A673 (cell line): ENCODE measurements at regions of chr17 and their contacts with region 1.

Region 1: DNA sequence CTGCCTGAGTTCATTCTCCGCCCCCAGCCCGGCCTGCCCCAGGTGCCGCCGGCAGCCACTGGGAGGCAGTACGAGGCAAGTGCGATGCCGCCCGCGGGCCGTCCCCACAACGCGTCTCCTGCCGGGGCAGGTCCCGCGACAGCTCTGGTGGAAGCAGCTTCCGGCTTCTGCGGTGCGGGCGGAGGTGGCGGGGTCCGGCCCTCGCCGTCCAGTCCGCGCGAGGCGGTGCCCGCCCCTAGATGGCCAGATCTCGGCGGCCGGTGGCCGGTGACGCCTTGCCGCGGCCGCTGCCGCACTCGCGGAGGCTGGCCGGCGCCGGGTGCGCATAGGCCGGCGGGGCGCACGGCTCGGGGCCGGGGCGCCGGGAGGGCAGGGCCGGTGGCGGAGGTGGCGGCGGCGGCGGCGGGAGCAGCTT is 1.8 kb downstream of the GJD3 start:
- DNase-seq: peak; percentile 71
- H3K4me3 ChIP-seq: peak overlapping the region; percentile 42
- H3K27ac ChIP-seq: no peak overlapping the region
- H3K4me1 ChIP-seq: no peaks in the 10 kb centered on the region
- H3K27me3 ChIP-seq: no peaks in the 10 kb centered on the region
- CTCF ChIP-seq: peak; percentile 67

Region 2: DNA sequence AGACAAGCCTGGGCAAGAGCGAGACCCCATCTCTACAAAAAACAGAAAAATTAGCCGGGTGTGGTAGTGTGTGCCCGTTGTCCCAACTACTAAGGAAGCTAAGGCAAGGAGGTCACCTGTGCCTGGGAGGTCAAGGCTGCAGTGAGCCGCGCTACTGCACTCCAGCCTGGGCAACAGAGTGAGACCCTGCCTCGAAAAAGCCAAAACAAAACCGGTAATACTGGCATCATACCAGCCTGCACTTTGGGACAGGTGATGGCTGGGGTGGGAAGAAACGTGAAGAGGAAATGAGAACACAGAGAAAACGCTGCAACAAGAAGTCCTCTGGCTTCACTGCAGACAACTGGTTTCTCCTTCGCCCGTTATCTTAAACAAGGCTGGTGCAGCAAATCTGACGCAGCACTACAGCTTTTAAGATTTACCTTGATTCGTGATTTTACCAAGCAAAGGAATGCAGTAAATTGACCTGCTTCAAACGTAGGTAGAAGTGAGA is 223.1 kb before region 1 on chr17:
- CTCF ChIA-PET with region 1: no interaction called
- POLR2A ChIA-PET with region 1: interaction called, 10 read pairs
- intact Hi-C with region 1: no loop called
- DNase-seq: no peak
- H3K4me3 ChIP-seq: peak overlapping the region; percentile 58
- H3K27ac ChIP-seq: peak overlapping the region; percentile 90
- H3K4me1 ChIP-seq: peaks cover 5% of the 10 kb centered on the region
- H3K27me3 ChIP-seq: no peaks in the 10 kb centered on the region
- CTCF ChIP-seq: no peak

Region 3: GRCh38 chr17:40559954-40560591 is 197.4 kb after region 1 on chr17:
- CTCF ChIA-PET with region 1: interaction called, 5 read pairs
- POLR2A ChIA-PET with region 1: no interaction called
- intact Hi-C with region 1: loop called (anchors 10 kb)
- DNase-seq: peak; percentile 83
- H3K4me3 ChIP-seq: no peak overlapping the region
- H3K27ac ChIP-seq: no peak overlapping the region
- H3K4me1 ChIP-seq: peaks cover 8% of the 10 kb centered on the region
- H3K27me3 ChIP-seq: no peaks in the 10 kb centered on the region
- CTCF ChIP-seq: peak; percentile 85

Region 4: GRCh38 chr17:40632216-40632615 is 269.5 kb after region 1 on chr17:
- CTCF ChIA-PET with region 1: no interaction called
- POLR2A ChIA-PET with region 1: no interaction called
- intact Hi-C with region 1: no loop called
- DNase-seq: no peak
- H3K4me3 ChIP-seq: no peak overlapping the region
- H3K27ac ChIP-seq: no peak overlapping the region
- H3K4me1 ChIP-seq: no peaks in the 10 kb centered on the region
- H3K27me3 ChIP-seq: no peaks in the 10 kb centered on the region
- CTCF ChIP-seq: no peak